ENCODE measurements at regions of chr5 and their contacts with region 1.

Region 1: DNA sequence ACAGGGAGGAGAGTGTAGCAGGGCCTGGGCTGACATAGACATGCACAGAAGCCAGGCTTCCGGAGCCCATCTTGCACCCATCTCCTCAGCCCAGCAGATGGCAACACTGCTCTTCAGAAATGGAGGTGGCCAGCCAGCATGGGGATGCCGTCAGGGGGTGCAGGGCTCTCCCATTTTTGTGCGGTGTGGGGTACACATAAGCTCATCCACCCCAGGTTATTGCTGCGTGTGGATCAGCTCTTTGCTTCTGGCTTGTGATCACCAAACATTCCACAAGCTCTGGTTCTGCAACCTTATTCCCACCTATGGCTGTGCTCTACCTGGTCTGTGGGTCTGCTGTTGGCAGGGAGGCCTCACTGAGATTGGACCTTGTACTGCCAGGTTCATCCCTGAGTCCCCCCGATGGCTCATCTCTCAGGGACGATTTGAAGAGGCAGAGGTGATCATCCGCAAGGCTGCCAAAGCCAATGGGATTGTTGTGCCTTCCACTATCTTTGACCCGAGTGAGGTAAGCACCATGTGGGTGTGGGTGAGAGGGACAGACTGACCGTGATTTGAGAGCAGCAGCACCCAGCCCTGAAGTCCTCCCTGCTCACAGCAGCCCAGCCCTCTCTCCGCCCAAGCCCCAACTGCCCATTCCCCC is 17.3 kb downstream of the SLC22A5 start:
- DNase-seq: peak; percentile 60 to 86 (median 72)
- H3K4me3 ChIP-seq: no peak overlapping the region
- H3K4me3 Mint-ChIP-seq: peak overlapping the region in 1 of 7 donors; percentile 56
- H3K27ac ChIP-seq: no peak overlapping the region
- H3K27ac Mint-ChIP-seq: peak overlapping the region in 6 of 8 donors; percentile 7 to 85 (median 53)
- H3K4me1 ChIP-seq: peaks cover 19% of the 10 kb centered on the region
- H3K4me1 Mint-ChIP-seq: peaks cover 20 to 37% (median 23%) of the 10 kb centered on the region in 3 donors
- H3K27me3 ChIP-seq: no peaks in the 10 kb centered on the region
- H3K27me3 Mint-ChIP-seq: no peaks in the 10 kb centered on the region

Region 2: GRCh38 chr5:132098151-132098594 is 288.6 kb before region 1 on chr5:
- CTCF ChIA-PET with region 1: no interaction called
- POLR2A ChIA-PET with region 1: no interaction called
- DNase-seq: no peak
- H3K4me3 ChIP-seq: no peak overlapping the region
- H3K4me3 Mint-ChIP-seq: peak overlapping the region in 1 of 7 donors; percentile 15
- H3K27ac ChIP-seq: no peak overlapping the region
- H3K27ac Mint-ChIP-seq: peak overlapping the region in 4 of 8 donors; percentile 29 to 99 (median 62)
- H3K4me1 ChIP-seq: peaks cover 65% of the 10 kb centered on the region
- H3K4me1 Mint-ChIP-seq: peaks cover 80 to 91% (median 81%) of the 10 kb centered on the region in 3 donors
- H3K27me3 ChIP-seq: no peaks in the 10 kb centered on the region
- H3K27me3 Mint-ChIP-seq: no peaks in the 10 kb centered on the region

Region 3: DNA sequence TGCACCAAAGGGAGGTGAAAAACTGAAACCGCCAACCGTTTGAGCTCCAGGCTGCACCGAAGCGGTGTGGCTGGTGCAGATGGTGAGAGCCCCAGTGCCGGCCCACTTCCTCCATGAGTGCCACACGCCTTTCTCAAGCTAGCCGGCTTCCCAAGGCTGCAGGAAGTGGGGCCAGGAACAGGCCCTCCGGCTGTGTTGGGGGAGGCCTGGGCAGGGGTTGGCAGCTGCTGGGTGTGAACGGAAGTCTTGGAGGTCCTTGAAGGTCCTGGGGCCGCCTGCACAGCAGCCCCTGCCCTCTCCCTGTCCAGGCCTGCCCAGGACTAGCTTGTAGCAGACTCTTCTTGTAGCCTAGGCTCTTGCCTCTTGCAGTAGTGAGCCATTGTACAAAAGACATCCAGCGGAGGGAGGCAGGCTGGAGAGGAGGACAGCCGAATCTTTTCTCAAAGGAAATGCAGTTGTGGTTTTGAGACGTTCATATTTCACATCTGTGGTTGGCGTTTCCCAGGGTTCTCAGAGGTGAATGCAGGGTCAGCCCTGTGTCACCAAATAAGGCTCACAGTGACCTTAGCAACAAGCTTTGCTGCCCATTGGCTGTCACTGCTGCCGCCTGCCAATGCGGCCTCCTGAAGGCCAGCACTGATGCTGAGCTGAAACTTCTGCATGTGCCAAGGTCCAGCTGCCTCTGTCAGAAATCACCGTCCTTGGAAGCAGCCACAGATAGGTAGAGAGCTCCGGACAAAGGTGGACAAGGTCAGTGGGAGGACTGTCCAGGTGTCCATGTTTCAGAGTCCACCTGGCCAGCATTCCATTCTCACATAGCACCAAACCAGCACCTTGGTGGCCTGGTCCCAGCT is 79.9 kb after region 1 on chr5:
- CTCF ChIA-PET with region 1: interaction called, 11 read pairs
- POLR2A ChIA-PET with region 1: no interaction called
- DNase-seq: peak; percentile 63 to 88 (median 78)
- H3K4me3 ChIP-seq: peak overlapping the region; percentile 57
- H3K4me3 Mint-ChIP-seq: peak overlapping the region; percentile 72 to 92 (median 82)
- H3K27ac ChIP-seq: peak overlapping the region; percentile 64
- H3K27ac Mint-ChIP-seq: peak overlapping the region; percentile 87 to 100 (median 98)
- H3K4me1 ChIP-seq: peaks cover 95% of the 10 kb centered on the region
- H3K4me1 Mint-ChIP-seq: peaks cover 98 to 100% (median 99%) of the 10 kb centered on the region in 3 donors
- H3K27me3 ChIP-seq: no peaks in the 10 kb centered on the region
- H3K27me3 Mint-ChIP-seq: no peaks in the 10 kb centered on the region

Region 4: DNA sequence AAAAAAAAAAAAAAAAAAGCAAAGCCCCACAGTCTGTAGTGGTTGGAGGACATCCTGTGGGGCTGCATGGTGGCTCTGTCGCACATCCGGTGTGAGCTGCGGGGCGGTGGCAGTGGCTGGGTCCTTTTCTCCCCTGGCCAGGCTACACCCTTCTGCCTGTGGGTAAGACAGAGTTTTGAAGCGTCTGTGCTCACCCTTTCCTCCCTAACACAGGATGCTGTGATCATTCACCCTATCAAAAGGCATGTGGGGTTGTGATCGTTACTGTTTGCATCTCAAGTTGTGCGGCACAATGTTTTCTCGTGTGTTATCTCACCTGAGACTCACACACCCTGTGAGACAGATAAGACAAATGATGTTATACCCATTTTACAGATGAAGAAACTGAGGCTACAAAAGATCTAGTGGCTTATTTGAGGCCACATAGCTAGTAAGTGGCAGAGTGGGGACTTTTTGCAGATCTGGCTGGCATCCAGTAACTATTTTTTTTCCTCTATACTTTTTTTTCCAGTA is 86.3 kb after region 1 on chr5:
- CTCF ChIA-PET with region 1: interaction called, 29 read pairs
- POLR2A ChIA-PET with region 1: no interaction called
- DNase-seq: peak; percentile 81 to 96 (median 89)
- H3K4me3 ChIP-seq: no peak overlapping the region
- H3K4me3 Mint-ChIP-seq: peak overlapping the region; percentile 39 to 86 (median 64)
- H3K27ac ChIP-seq: peak overlapping the region; percentile 62
- H3K27ac Mint-ChIP-seq: peak overlapping the region; percentile 93 to 99 (median 96)
- H3K4me1 ChIP-seq: peaks cover 86% of the 10 kb centered on the region
- H3K4me1 Mint-ChIP-seq: peaks cover 87 to 99% (median 97%) of the 10 kb centered on the region in 3 donors
- H3K27me3 ChIP-seq: no peaks in the 10 kb centered on the region
- H3K27me3 Mint-ChIP-seq: peaks cover 0 to 9% of the 10 kb centered on the region in 2 donors

Region 5: DNA sequence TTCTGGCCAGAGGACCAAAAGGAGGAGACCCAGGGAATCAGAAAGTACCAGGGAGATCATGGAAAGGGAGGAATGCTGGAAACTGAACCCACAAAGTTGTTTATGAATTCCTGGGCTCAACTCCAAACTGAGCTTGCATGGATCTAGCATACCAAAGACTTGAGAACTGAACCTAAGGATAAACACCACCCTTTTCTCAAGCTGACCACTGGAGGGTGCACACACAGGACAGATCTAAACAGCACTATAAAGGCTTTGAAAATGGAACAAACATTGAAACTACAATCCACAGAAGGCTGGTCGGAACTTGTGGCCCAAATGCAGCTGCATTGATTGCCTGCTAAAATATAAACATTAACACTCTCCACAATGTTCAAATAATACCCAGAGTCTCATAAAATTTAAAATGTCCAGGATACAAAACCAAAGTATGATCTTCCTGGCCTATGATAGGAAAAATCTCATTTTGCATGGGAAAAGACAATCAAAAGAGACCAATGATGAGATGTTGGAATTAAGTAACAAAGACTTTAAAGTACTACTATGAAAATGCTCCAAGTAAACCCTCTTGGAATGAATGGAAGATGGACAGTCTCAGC is 119.4 kb after region 1 on chr5:
- CTCF ChIA-PET with region 1: interaction called, 299 read pairs
- POLR2A ChIA-PET with region 1: interaction called, 7 read pairs
- DNase-seq: no peak
- H3K4me3 ChIP-seq: no peak overlapping the region
- H3K4me3 Mint-ChIP-seq: no peak overlapping the region
- H3K27ac ChIP-seq: no peak overlapping the region
- H3K27ac Mint-ChIP-seq: no peak overlapping the region
- H3K4me1 ChIP-seq: peaks cover 3% of the 10 kb centered on the region
- H3K4me1 Mint-ChIP-seq: peaks cover 2 to 3% (median 2%) of the 10 kb centered on the region in 3 donors
- H3K27me3 ChIP-seq: peaks cover 4% of the 10 kb centered on the region
- H3K27me3 Mint-ChIP-seq: peaks cover 11 to 29% of the 10 kb centered on the region in 2 donors

Region 6: GRCh38 chr5:132561601-132562000 is 174.8 kb after region 1 on chr5:
- CTCF ChIA-PET with region 1: no interaction called
- POLR2A ChIA-PET with region 1: no interaction called
- DNase-seq: no peak
- H3K4me3 ChIP-seq: no peak overlapping the region
- H3K4me3 Mint-ChIP-seq: no peak overlapping the region
- H3K27ac ChIP-seq: no peak overlapping the region
- H3K27ac Mint-ChIP-seq: no peak overlapping the region
- H3K4me1 ChIP-seq: peaks cover 36% of the 10 kb centered on the region
- H3K4me1 Mint-ChIP-seq: peaks cover 24 to 44% (median 35%) of the 10 kb centered on the region in 3 donors
- H3K27me3 ChIP-seq: no peaks in the 10 kb centered on the region
- H3K27me3 Mint-ChIP-seq: no peaks in the 10 kb centered on the region

Measured in CD8-positive, alpha-beta memory T cell (primary cell).